ENCODE measurements at regions of chr3 and their contacts with region 1.

Region 1: DNA sequence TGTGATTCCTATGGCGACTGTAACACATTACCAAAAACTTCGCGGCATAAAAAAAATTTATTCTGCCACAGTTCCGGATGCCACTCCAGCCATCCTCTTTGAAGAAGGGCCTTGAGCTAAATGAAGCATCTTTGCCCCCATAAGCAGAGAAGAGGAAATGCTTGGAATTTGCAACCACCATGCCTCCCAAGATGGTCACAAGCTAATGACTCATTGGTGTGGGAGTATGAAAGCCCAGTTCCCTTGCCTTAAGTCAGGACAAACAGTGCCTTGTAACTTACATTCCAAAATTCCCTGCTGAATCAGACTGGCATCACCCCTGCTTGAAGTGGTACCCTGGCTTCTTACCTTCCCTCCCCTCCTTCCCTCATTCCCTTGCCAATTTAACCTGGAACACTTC is 1077.4 kb downstream of the EPHA3 start:
- DNase-seq: no peak

Region 2: DNA sequence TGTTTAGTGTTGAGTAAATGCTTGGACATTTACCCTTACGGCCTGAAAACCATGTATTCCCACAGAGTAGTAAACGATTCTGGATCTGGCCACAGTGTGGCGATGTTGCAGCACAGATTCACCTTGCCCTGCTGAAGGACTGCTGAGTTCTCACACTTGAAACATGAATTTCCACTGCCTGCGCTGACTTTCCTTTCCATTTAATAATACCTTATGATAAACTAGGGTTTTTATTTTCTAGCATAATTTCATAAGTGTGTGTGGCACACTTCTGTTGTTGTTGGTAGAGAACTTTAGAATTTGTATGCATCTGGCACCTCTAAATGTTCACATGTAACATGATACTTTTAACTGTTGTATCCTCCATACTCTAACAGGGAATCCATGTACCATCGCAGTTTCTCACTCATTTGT is 1981.2 kb before region 1 on chr3:
- intact Hi-C with region 1: loop called in 1 of 2 experiments (anchors 10 kb)
- DNase-seq: peak; percentile 84

Region 3: DNA sequence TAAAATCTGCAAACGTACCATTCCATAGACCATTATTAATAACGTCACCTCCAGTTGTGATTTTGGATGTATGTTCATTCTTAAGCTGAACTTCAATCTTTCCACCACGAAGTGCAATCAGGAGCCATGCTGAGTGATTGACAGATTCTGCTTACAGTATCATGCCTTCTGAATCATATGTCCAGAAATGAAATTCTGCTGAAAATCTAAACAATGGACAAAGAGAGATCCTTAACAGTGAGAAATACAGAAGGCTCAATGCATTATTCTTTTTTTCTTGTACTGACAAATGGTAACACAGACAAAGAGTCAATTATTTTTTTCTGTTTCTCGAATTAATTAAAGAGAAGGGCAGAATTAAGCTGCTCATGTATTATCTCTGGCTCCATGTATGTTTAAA is 37.0 kb after region 1 on chr3:
- intact Hi-C with region 1: no loop called
- DNase-seq: no peak